Activated CD8-positive, alpha-beta memory T cell treated with anti-CD3 and anti-CD28 coated beads, Interleukin-2, amount 10 ng/mL, durations not matched to agents 7 days and 5 days (primary cell): ENCODE measurements at regions of chr16 and their contacts with region 1.

Region 1: DNA sequence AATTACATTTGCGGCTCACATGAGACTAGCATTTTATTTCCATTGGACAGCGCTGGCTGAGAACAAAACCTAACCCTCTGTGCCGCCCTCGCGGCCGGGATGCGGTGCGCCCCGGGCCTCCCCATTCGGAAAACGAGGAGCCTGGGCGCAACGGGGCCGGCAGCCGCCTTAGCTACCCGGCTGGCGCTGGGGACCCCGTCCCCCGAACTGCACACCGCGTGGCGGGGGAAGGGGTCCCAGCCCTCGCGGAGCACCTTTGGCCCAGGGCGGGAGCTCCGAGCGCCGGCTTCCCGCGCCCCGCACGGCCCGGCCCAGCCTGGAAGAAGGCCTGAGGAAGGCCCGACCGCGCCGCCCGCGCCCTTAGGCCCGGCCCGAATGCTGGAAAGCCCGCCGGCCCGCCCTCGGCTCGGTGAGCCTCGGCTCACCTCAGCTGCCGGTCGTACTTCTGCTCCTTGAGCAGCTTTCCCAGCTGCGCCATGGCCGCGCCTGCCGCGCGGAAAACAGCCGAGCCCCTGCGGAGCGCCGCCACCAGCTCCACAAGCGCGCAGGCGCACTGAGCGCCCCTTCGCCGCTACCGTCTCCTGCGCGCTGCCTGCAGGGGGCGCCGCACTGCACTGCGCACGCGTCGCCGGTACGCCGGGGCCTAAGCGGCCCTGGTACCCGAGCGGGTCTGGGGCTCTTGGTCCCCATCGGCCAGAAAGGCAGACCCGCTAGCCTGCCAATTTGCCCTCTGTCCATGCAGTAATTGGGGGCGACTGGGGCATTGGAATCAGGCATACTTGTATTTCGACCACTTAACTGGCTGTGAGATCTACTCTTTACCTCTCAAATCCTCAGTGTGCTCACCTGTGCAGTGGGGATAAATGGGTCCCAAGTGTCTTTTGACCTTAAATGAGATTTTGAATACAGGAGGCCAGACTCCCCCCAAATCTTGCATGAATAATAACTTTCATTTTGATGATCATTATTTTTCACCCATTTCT is at the start of gene NAE1:
- DNase-seq: peak; percentile 90
- ATAC-seq: peak; percentile 96
- H3K4me3 Mint-ChIP-seq: peak within 1 kb of the TSS; percentile 71
- H3K27ac Mint-ChIP-seq: peak within 1 kb of the TSS; percentile 71
- H3K4me1 Mint-ChIP-seq: peaks cover 40% of the 10 kb centered on the region
- H3K27me3 Mint-ChIP-seq: no peaks in the 10 kb centered on the region
- total RNA-seq, gene NAE1: 81.1 to 88.5 TPM

Region 2: DNA sequence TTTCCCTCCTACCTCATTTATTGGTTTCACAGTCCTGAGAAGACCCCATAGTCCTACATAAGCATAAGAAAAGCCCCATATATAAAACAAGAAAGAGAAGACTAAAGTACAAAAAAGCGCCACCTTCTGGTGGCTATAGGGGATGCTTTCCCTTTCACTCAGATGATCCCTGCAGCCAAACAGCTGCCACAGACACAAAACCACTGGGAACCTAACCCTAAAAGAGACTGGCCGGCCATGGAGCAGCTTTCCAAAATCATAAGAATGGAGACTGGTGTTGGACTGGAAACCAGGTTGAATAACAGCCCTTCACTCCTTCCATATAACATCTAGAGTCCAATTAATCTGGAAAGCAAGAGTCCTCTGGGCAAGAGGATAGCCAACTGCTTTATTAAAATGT is 90.7 kb before region 1 on chr16:
- CTCF ChIA-PET with region 1: interaction called, 11 read pairs
- DNase-seq: peak; percentile 57
- ATAC-seq: peak; percentile 57
- H3K4me3 Mint-ChIP-seq: no peak overlapping the region
- H3K27ac Mint-ChIP-seq: no peak overlapping the region
- H3K4me1 Mint-ChIP-seq: peaks cover 27% of the 10 kb centered on the region
- H3K27me3 Mint-ChIP-seq: no peaks in the 10 kb centered on the region

Region 3: GRCh38 chr16:66801320-66802105 is 29.2 kb before region 1 on chr16 and contains the start of gene TERB1:
- CTCF ChIA-PET with region 1: interaction called, 10 read pairs
- DNase-seq: no peak
- ATAC-seq: no peak
- H3K4me3 Mint-ChIP-seq: no peak within 1 kb of the TSS
- H3K27ac Mint-ChIP-seq: no peak within 1 kb of the TSS
- H3K4me1 Mint-ChIP-seq: no peaks in the 10 kb centered on the region
- H3K27me3 Mint-ChIP-seq: no peaks in the 10 kb centered on the region
- total RNA-seq, gene TERB1: 0.47 TPM in 1 of 2 experiments, not detected in the other

Region 4: GRCh38 chr16:66844342-66845079 is 13.8 kb after region 1 on chr16 and contains the start of gene CA7:
- CTCF ChIA-PET with region 1: interaction called, 47 read pairs
- DNase-seq: no peak
- ATAC-seq: peak; percentile 39
- H3K4me3 Mint-ChIP-seq: peak within 1 kb of the TSS; percentile 36
- H3K27ac Mint-ChIP-seq: no peak within 1 kb of the TSS
- H3K4me1 Mint-ChIP-seq: peaks cover 20% of the 10 kb centered on the region
- H3K27me3 Mint-ChIP-seq: peaks cover 50% of the 10 kb centered on the region
- total RNA-seq, gene CA7: not detected

Region 5: DNA sequence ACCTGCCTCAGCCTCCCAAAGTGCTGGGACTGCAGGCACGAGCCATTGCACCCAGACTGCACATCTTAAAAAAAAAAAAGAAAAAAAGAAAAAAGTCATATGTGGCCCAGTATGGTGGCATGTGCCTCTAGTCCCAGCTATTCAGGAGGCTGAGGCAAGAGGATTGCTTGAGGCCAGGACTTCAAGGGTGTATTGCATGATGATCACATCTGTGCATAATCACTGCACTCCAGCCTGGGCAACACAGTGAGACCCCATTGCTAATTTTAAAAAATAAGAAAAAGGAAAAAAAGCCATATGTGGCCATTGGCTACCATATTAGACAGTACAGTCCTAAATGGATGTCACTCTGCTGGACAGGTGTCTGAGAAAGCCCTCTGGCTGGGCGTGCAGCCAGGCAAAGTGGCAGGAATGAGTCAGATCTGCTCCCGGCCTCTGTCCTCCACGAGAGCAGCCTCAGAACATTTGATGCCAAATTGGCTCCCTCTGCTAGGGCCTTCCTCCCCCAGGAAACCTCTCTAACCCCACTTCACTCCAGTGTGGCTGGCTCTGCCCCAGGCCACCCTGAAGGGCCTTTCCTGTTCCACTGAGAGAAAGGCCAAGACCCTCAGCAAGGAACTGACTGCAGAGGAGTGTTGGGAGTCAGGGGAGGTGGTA is 28.2 kb after region 1 on chr16:
- CTCF ChIA-PET with region 1: interaction called, 25 read pairs
- DNase-seq: no peak
- ATAC-seq: no peak
- H3K4me3 Mint-ChIP-seq: no peak overlapping the region
- H3K27ac Mint-ChIP-seq: no peak overlapping the region
- H3K4me1 Mint-ChIP-seq: no peaks in the 10 kb centered on the region
- H3K27me3 Mint-ChIP-seq: no peaks in the 10 kb centered on the region

Region 6: DNA sequence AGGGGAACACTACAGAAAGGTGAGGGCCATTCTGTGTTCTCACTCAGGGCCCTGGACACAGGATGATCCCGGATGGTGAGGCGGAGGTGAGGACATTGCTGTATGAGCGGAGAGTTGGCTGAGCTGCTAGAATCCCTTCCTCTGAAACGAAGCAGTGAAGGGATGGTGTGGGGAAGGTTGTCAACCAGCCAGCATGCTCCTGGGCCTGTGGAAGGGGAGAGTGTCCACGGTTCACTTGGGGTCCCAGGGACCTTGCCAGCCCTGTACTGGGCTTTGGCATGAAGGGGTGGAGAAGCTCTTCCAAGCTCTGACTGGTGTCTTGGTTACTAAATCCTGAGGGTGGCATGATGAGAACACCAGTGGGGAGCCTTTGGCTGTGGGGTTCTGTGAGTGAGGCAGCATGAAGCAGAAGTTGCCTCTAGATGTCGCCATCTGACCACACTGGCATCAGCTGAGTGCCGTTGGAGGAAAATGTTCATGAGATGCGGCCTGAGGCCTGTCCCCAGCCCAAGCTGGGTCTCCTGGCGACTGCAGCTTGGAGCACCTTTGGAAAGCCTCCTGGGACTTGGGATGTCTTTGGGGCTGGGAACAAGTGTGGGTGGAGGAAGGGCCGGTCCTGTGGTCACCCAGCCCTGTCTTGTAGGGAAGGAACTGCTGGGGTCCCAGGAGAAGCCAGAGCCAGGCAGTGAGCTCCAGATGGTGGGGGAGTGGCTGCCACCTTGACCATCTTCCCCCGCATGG is 64.4 kb after region 1 on chr16:
- CTCF ChIA-PET with region 1: interaction called, 13 read pairs
- DNase-seq: peak; percentile 83
- ATAC-seq: peak; percentile 90
- H3K4me3 Mint-ChIP-seq: no peak overlapping the region
- H3K27ac Mint-ChIP-seq: peak overlapping the region; percentile 13
- H3K4me1 Mint-ChIP-seq: peaks cover 20% of the 10 kb centered on the region
- H3K27me3 Mint-ChIP-seq: no peaks in the 10 kb centered on the region